ENCODE measurements at regions of chrX and their contacts with region 1.

Region 1: GRCh38 chrX:47581731-47582647 is at the start of gene TIMP1:
- DNase-seq: peak; percentile 85 to 92 (median 91)
- ATAC-seq: peak; percentile 90 to 96 (median 94)
- H3K4me3 ChIP-seq: peak within 1 kb of the TSS in 11 of 12 donors; percentile 17 to 69 (median 53)
- H3K27ac ChIP-seq: peak within 1 kb of the TSS in 11 of 12 donors; percentile 16 to 91 (median 80)
- H3K4me1 ChIP-seq: peaks cover 0 to 21% (median 0%) of the 10 kb centered on the region in 12 donors
- H3K27me3 ChIP-seq: no peaks in the 10 kb centered on the region
- CTCF ChIP-seq: no peak
- POLR2A ChIP-seq: peak in 1 of 2 donors; percentile 47
- total RNA-seq, gene TIMP1: 52.5 to 864 (median 177) TPM

Region 2: DNA sequence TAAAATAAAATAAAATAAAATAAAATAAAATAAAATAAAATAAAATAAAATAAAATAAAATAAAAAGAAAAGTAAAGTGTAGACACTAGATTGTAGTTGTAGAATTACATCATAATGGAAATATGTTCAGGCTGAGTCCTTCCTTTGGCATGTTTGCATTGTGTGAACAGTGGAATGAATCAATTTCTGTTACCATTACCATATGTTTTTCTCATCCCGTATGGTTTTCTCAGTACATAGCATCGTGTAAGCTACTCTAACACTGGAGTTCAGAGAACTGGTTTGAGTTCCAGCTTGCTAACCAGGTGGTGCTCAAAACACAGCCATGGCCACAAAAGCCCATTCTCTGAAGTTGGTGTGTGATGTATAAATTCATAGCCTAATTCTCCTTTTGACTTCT is 303.3 kb before region 1 on chrX:
- intact Hi-C with region 1: no loop called
- DNase-seq: no peak
- ATAC-seq: no peak
- H3K4me3 ChIP-seq: no peak overlapping the region
- H3K27ac ChIP-seq: no peak overlapping the region
- H3K4me1 ChIP-seq: no peaks in the 10 kb centered on the region
- H3K27me3 ChIP-seq: peaks cover 0 to 38% (median 0%) of the 10 kb centered on the region in 9 donors
- CTCF ChIP-seq: no peak
- POLR2A ChIP-seq: no peak

Region 3: GRCh38 chrX:47619486-47620302 is 37.7 kb after region 1 on chrX and contains the start of gene SYN1:
- intact Hi-C with region 1: loop called in 1 of 10 experiments (anchors 5 kb)
- DNase-seq: peak; percentile 79 to 90 (median 85)
- ATAC-seq: peak; percentile 67 to 95 (median 93)
- H3K4me3 ChIP-seq: peak within 1 kb of the TSS in 10 of 12 donors; percentile 9 to 60 (median 42)
- H3K27ac ChIP-seq: no peak within 1 kb of the TSS
- H3K4me1 ChIP-seq: peaks cover 0 to 6% (median 0%) of the 10 kb centered on the region in 12 donors
- H3K27me3 ChIP-seq: peaks cover 0 to 14% (median 0%) of the 10 kb centered on the region in 9 donors
- CTCF ChIP-seq: peak in 6 of 12 donors; percentile 7 to 61 (median 28)
- POLR2A ChIP-seq: no peak
- total RNA-seq, gene SYN1: 7.1 to 20.5 (median 11.2) TPM

Region 4: GRCh38 chrX:47644557-47645091 is 62.6 kb after region 1 on chrX:
- intact Hi-C with region 1: loop called in 1 of 10 experiments (anchors 10 kb)
- DNase-seq: no peak
- ATAC-seq: peak; percentile 60 to 81 (median 66)
- H3K4me3 ChIP-seq: no peak overlapping the region
- H3K27ac ChIP-seq: peak overlapping the region in 1 of 12 donors; percentile 10
- H3K4me1 ChIP-seq: peaks cover 0 to 17% (median 7%) of the 10 kb centered on the region in 12 donors
- H3K27me3 ChIP-seq: peaks cover 0 to 4% (median 0%) of the 10 kb centered on the region in 9 donors
- CTCF ChIP-seq: peak in 10 of 12 donors; percentile 10 to 45 (median 32)
- POLR2A ChIP-seq: no peak

Measured in heart left ventricle (tissue), 16 donors.